ENCODE measurements at regions of chr19 and their contacts with region 1.

Region 1: DNA sequence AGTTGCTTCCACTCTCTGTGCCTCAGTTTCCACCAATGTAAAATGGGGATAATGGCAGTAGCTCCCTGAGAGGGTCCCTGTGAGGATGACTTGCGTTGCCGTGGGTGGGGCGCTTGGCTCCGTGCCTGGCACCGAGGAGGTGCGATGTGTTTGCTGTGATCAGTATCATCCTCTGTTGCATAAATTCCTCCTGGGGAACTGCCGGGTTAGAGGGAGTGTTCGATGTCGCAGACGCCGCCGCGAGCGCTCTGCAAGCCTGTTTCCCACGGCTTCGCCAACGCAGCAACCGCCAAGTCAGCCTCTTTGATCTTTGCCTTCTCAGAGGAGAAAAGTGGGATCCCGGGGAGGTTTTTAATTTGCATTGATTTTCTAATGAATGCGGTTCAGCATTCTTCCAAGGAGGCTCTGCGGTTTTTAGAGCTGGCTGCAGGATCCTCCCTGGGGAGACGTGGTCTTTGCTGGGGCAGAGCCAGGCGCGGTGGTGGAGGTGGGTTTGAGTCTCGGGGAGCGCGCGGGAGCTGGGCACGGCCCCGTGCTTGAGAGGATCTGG is 7.6 kb downstream of the GPR32 start:
- DNase-seq: no peak
- H3K4me3 ChIP-seq: peak overlapping the region in 1 of 59 donors; percentile 5
- H3K27ac ChIP-seq: no peak overlapping the region
- H3K27me3 ChIP-seq: peaks cover 3 to 93% (median 67%) of the 10 kb centered on the region in 45 donors
- CTCF ChIP-seq: no peak

Region 2: DNA sequence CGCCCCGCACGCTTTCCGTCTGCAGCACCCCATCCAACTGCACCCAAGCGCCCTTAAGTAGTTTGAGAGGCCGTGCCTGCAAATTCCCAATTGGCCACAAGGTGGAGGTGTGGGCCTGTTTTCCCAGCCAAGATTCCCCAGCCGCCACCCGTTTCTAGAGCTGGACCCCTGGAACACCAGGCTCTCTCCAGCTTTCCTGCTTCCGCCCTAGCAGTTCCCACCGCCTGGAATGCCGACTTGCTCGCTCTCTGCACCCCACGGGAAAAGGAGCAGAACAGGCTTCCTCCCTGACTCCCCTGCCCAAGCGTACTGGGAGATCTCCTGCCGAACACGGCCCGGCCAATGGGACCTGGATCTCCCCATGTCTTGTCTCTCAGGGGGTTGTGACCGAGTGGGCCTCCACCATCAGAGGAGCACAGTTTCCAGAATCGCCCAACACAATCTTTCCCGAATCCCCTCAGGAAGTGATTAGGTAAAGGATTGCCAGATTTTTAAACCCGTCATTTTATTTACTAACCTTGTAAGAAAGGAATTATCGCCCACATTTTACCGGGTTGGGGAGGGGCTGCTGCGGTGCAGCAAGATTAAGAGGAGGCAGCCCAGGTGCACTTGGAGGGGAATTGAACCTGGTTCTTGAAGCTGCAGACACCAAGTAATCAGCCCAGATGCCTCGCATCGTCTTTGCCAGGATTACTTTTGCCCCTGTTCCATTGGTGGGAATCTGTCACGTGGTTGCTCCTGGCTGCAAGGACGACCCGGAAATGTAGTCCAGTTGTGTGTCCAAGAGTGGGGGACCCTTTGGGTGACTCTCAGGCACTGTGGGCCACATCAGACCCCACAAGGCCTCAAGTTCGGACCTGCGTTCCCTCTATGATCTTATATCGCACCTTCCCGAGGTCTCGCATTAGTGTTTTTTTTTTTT is 408.9 kb before region 1 on chr19:
- intact Hi-C with region 1: loop called (anchors 2 kb)
- DNase-seq: peak; percentile 78 to 94 (median 88)
- H3K4me3 ChIP-seq: peak overlapping the region; percentile 57 to 97 (median 77)
- H3K27ac ChIP-seq: peak overlapping the region in 58 of 59 donors; percentile 12 to 91 (median 82)
- H3K27me3 ChIP-seq: no peaks in the 10 kb centered on the region
- CTCF ChIP-seq: peak; percentile 66 to 97 (median 89)

Region 3: GRCh38 chr19:50537762-50538230 is 240.0 kb before region 1 on chr19:
- intact Hi-C with region 1: loop called in 1 of 2 experiments (anchors 5 kb)
- DNase-seq: peak; percentile 90 to 97 (median 94)
- H3K4me3 ChIP-seq: peak overlapping the region in 6 of 59 donors; percentile 4 to 25 (median 14)
- H3K27ac ChIP-seq: peak overlapping the region in 50 of 59 donors; percentile 6 to 86 (median 72)
- H3K27me3 ChIP-seq: no peaks in the 10 kb centered on the region
- CTCF ChIP-seq: peak; percentile 70 to 99 (median 95)

Region 4: DNA sequence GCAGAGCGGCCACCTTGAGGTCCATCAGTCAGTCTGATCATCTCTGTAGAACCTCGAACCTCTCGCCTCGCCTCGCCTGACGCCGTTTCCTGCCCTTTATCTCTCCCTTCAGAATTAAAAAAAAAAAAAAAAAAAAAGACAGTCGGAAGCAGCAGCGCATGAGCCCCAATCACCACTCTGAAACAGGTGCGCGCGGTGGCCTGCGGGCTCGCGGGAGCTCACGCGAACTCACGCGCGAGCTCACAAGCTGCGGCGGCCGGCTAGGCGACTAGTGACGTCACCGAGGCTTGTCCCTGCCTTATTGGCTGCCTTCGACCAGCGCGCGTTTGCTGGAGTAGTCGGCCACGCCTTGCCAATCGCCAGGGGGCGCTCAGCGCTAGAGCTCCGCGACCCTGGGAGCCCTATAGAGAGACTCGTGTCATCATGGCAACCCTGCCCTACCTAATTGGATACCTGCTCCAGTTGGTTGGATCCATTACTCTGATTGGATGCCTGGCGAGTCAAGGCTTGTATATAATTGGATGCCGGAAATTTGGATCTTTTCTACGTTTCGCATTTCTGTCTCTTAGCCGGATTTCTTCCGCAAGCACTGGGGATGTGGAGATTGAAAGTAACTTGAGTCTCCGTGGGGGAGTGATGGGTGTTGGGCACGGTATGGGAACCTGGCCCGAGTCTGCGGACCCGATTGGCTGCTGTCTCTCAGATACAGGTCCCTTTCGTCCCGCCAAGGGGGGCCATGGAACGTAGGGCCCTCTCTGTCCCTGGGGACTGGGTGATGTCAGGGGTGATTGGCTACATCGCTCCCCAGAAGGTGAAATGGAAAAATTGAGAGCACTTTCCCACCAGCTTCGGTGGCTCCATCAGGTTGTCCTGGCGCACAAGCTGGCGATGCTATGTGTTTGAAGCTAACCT is 169.7 kb before region 1 on chr19:
- intact Hi-C with region 1: loop called (anchors 1 to 2 kb)
- DNase-seq: peak; percentile 92 to 99 (median 98)
- H3K4me3 ChIP-seq: peak overlapping the region in 56 of 59 donors; percentile 11 to 65 (median 46)
- H3K27ac ChIP-seq: peak overlapping the region in 44 of 59 donors; percentile 19 to 79 (median 61)
- H3K27me3 ChIP-seq: no peaks in the 10 kb centered on the region
- CTCF ChIP-seq: peak; percentile 42 to 94 (median 84)

Region 5: GRCh38 chr19:50669302-50670101 is 108.3 kb before region 1 on chr19:
- intact Hi-C with region 1: loop called in 1 of 2 experiments (anchors 2 kb)
- DNase-seq: peak in 7 of 10 donors; percentile 35 to 68 (median 56)
- H3K4me3 ChIP-seq: no peak overlapping the region
- H3K27ac ChIP-seq: peak overlapping the region in 3 of 59 donors; percentile 5 to 35 (median 9)
- H3K27me3 ChIP-seq: peaks cover 0 to 47% (median 21%) of the 10 kb centered on the region in 45 donors
- CTCF ChIP-seq: peak; percentile 66 to 88 (median 79)

Region 6: GRCh38 chr19:50705422-50706019 is 72.3 kb before region 1 on chr19:
- intact Hi-C with region 1: loop called in 1 of 2 experiments (anchors 2 kb)
- DNase-seq: peak in 2 of 10 donors; percentile 46 to 57
- H3K4me3 ChIP-seq: no peak overlapping the region
- H3K27ac ChIP-seq: no peak overlapping the region
- H3K27me3 ChIP-seq: peaks cover 0 to 5% (median 0%) of the 10 kb centered on the region in 45 donors
- CTCF ChIP-seq: peak in 55 of 56 donors; percentile 13 to 70 (median 58)

Region 7: DNA sequence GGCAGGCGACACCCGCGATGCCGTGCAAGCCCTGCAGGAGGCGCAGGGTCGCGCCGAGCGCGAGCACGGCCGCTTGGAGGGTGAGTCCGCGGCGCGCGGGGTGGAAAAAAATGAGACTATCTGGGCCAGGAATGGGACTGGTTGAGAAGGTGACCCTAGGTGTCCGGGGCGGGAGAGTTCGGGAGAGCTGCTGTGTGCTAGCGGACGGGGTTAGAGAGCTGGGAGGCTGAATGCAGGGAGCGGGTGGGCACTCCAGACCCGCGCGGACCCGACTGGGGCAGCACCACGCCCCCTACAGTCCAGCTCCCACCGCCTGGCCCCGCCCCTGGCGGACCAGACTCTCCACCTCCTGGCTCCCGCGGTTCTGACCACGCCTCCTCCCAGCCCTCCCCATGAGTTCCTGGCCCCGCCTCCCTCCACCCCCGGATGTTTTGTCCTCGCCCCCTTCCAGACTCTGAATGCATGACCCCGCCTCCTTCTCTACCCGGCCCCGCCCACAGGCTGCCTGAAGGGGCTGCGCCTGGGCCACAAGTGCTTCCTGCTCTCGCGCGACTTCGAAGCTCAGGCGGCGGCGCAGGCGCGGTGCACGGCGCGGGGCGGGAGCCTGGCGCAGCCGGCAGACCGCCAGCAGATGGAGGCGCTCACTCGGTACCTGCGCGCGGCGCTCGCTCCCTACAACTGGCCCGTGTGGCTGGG is 53.2 kb before region 1 on chr19:
- intact Hi-C with region 1: loop called in 1 of 2 experiments (anchors 5 kb)
- DNase-seq: peak; percentile 99 to 100 (median 99)
- H3K4me3 ChIP-seq: peak overlapping the region; percentile 60 to 93 (median 84)
- H3K27ac ChIP-seq: peak overlapping the region in 57 of 59 donors; percentile 41 to 90 (median 78)
- H3K27me3 ChIP-seq: no peaks in the 10 kb centered on the region
- CTCF ChIP-seq: peak; percentile 40 to 95 (median 72)